ENCODE measurements at regions of chr6 and their contacts with region 1.

Region 1: GRCh38 chr6:148395583-148396101 is 53.0 kb downstream of the SASH1 start:
- DNase-seq: peak in 4 of 5 donors; percentile 35 to 61 (median 58)
- ATAC-seq: peak; percentile 81 to 89 (median 86)
- H3K4me3 ChIP-seq: no peak overlapping the region
- H3K27ac ChIP-seq: peak overlapping the region; percentile 20 to 79 (median 52)
- H3K4me1 ChIP-seq: peaks cover 7 to 71% (median 46%) of the 10 kb centered on the region in 12 donors
- H3K27me3 ChIP-seq: no peaks in the 10 kb centered on the region
- CTCF ChIP-seq: no peak
- POLR2A ChIP-seq: no peak

Region 2: DNA sequence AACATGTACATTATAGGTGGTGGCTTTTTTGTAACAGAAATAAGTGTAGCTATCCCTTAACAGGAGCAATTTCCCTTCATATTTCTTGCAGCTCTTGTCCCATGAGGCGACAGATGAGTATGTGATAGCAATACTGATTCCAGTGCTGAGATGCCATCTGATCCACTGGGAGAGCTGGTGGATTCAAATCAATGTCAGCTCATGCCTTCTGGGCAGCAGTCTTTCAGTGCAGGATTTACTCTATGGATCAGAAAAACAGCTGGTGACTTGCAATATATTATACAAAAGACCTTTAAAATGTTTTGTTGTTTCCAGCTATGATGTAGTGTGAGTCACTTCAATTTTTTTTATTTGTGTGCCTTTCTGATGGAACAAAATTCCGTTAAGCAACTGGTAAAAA is 312.9 kb before region 1 on chr6:
- intact Hi-C with region 1: no loop called
- DNase-seq: no peak
- ATAC-seq: no peak
- H3K4me3 ChIP-seq: no peak overlapping the region
- H3K27ac ChIP-seq: no peak overlapping the region
- H3K4me1 ChIP-seq: no peaks in the 10 kb centered on the region
- H3K27me3 ChIP-seq: no peaks in the 10 kb centered on the region
- CTCF ChIP-seq: no peak
- POLR2A ChIP-seq: no peak

Region 3: DNA sequence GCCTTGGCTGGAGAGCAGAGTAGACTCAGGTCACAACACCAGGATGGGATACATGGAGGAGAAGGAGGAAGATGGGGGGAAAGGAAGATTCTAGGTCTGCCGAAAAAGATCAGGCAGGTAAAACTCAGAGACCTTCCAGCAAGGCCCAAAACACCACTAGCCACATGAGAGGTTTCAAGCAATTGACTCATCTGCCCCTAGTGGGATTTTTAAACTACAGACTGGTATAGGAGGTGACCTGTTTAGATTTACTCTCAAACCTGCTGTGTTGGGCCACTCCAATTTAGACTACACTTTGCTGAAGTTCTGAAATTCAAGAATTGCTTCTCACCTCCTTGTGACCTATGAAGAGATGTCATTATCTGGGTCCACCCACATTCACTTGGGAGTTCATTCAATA is 289.9 kb before region 1 on chr6:
- intact Hi-C with region 1: no loop called
- DNase-seq: no peak
- ATAC-seq: no peak
- H3K4me3 ChIP-seq: no peak overlapping the region
- H3K27ac ChIP-seq: no peak overlapping the region
- H3K4me1 ChIP-seq: no peaks in the 10 kb centered on the region
- H3K27me3 ChIP-seq: no peaks in the 10 kb centered on the region
- CTCF ChIP-seq: no peak
- POLR2A ChIP-seq: no peak

Region 4: GRCh38 chr6:148273962-148274752 is 121.5 kb before region 1 on chr6:
- intact Hi-C with region 1: no loop called
- DNase-seq: no peak
- ATAC-seq: no peak
- H3K4me3 ChIP-seq: peak overlapping the region in 5 of 12 donors; percentile 32 to 56 (median 44)
- H3K27ac ChIP-seq: peak overlapping the region in 1 of 12 donors; percentile 17
- H3K4me1 ChIP-seq: peaks cover 0 to 7% (median 0%) of the 10 kb centered on the region in 12 donors
- H3K27me3 ChIP-seq: peaks cover 0 to 5% (median 0%) of the 10 kb centered on the region in 9 donors
- CTCF ChIP-seq: no peak
- POLR2A ChIP-seq: no peak

Region 5: DNA sequence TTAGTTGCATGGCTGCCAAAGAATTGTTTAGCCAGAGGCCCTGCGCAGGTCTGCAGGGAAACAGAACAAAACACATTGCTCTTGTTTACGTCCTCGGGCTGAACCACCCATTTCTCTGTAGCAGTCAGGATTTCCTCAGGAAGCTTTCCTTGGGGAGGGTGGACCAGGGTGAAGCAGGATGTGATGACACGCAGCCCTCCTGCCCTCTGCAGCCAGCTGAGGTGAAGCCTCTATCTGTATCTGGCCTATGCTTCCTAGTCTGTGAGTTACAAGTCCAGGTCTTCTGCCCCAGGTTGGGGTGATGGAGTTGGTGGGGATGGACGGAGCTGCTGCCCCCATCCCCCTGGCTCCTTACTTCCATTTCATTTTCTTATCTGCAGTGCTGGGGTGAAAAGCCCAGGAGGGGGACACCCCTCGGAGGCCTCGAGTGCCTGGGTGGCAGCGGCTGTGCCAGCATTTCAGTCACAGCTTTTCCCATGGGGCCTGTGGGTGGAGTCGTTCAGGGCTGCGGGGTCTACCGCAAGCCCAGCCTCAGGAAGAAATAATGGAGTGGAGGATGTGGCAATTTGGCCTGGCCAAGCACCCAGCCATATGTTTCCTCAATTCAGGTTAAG is 28.1 kb before region 1 on chr6:
- intact Hi-C with region 1: loop called in 1 of 10 experiments (anchors 2 kb)
- DNase-seq: peak; percentile 72 to 81 (median 75)
- ATAC-seq: peak; percentile 77 to 91 (median 88)
- H3K4me3 ChIP-seq: peak overlapping the region in 1 of 12 donors; percentile 12
- H3K27ac ChIP-seq: peak overlapping the region; percentile 67 to 96 (median 86)
- H3K4me1 ChIP-seq: peaks cover 6 to 94% (median 63%) of the 10 kb centered on the region in 12 donors
- H3K27me3 ChIP-seq: no peaks in the 10 kb centered on the region
- CTCF ChIP-seq: no peak
- POLR2A ChIP-seq: no peak

Measured in heart left ventricle (tissue), 16 donors.